Heart left ventricle (tissue), 16 donors: ENCODE measurements at regions of chr14 and their contacts with region 1.

Region 1: GRCh38 chr14:94001501-94002396 is 4.6 kb downstream of the CCDC197 start:
- DNase-seq: peak in 4 of 5 donors; percentile 52 to 66 (median 60)
- ATAC-seq: peak; percentile 68 to 79 (median 76)
- H3K4me3 ChIP-seq: no peak overlapping the region
- H3K27ac ChIP-seq: peak overlapping the region in 1 of 12 donors; percentile 43
- H3K4me1 ChIP-seq: peaks cover 0 to 30% (median 10%) of the 10 kb centered on the region in 12 donors
- H3K27me3 ChIP-seq: peaks cover 0 to 4% (median 0%) of the 10 kb centered on the region in 9 donors
- CTCF ChIP-seq: peak; percentile 89 to 98 (median 96)
- POLR2A ChIP-seq: no peak

Region 2: DNA sequence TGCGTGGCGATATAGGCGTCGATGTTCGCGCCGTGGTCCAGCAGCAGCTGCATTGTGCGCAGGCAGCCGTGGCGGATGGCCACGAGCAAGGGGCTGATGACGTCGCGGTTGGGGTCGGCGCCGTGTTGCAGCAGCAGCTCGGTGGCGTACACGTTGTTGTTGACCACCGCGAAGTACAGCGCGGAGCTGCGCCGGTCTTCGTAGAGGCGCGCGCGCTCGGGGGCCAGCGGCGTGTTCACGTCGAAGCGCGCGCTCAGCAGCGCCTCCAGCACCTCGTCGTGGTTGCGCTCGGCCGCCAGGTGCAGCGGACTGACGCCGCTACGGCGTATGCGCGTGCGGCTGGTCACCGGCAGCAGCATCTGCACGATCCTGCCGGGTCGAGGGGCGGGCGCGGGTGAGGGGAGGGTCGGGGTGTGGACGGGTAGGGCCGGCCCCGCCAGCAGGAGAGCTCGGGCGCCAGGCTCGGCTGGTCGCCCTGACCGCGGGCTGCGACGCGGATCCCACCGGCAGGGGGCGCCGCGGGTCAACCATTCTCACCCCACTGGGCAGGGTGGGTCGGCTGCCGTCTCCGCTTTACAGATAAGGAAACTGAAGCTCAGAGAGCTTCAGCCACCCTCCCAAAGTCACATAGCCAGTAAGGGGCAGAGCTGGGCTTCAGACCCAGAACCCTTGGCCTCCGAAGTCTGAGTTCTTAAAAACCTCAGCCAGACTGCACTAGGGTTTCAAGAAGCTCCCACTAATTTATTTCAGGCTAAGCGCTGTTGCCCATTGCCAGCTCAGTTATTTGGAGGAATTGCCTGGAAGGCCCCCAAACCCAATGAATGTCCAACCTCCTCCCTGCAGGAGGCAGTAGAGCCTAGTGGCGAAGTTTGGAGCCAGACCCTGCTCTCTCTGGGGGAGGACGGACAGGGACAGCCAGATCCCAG is 62.2 kb before region 1 on chr14:
- intact Hi-C with region 1: loop called (anchors 1 to 5 kb)
- DNase-seq: peak; percentile 73 to 92 (median 79)
- ATAC-seq: peak; percentile 54 to 80 (median 72)
- H3K4me3 ChIP-seq: peak overlapping the region in 9 of 12 donors; percentile 15 to 50 (median 25)
- H3K27ac ChIP-seq: peak overlapping the region in 3 of 12 donors; percentile 24 to 75 (median 37)
- H3K4me1 ChIP-seq: peaks cover 0 to 20% (median 4%) of the 10 kb centered on the region in 12 donors
- H3K27me3 ChIP-seq: peaks cover 0 to 18% (median 7%) of the 10 kb centered on the region in 9 donors
- CTCF ChIP-seq: peak; percentile 75 to 93 (median 82)
- POLR2A ChIP-seq: no peak

Region 3: GRCh38 chr14:93975791-93976476 is 25.8 kb before region 1 on chr14:
- intact Hi-C with region 1: loop called in 1 of 10 experiments (anchors 1 kb)
- DNase-seq: no peak
- ATAC-seq: peak; percentile 43 to 63 (median 53)
- H3K4me3 ChIP-seq: peak overlapping the region; percentile 27 to 62 (median 54)
- H3K27ac ChIP-seq: peak overlapping the region; percentile 74 to 97 (median 92)
- H3K4me1 ChIP-seq: peaks cover 0 to 83% (median 24%) of the 10 kb centered on the region in 12 donors
- H3K27me3 ChIP-seq: no peaks in the 10 kb centered on the region
- CTCF ChIP-seq: peak in 1 of 12 donors; percentile 5
- POLR2A ChIP-seq: no peak

Region 4: DNA sequence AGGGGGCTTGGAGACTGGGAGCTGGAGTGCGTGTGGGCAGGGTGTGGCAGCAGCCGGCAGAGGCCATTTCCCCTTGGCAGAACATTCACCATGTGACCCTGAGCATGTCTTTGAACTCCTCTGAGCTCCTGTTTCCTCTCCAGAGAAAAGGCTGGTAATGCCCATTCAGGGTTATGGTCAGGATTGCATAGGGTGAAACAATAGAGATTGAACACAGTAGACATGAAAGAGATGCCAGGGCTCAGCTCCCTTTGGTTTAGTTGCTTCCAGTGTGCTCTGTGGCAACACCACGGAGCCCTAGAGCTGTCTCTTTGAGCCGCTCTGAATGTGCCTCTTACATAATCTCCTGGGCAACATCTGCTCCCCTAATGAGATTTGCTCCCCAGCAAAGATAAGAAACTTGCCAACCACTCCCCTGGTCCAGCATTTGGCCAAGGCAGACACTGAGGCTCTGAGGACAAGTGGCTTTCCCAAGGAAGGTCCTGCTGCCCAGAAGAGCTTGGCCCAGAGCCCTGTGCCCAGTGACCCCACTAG is 113.4 kb after region 1 on chr14:
- intact Hi-C with region 1: no loop called
- DNase-seq: peak in 1 of 5 donors; percentile 44
- ATAC-seq: peak; percentile 19 to 59 (median 50)
- H3K4me3 ChIP-seq: peak overlapping the region in 6 of 12 donors; percentile 6 to 81 (median 22)
- H3K27ac ChIP-seq: peak overlapping the region in 11 of 12 donors; percentile 24 to 96 (median 84)
- H3K4me1 ChIP-seq: peaks cover 0 to 46% (median 32%) of the 10 kb centered on the region in 12 donors
- H3K27me3 ChIP-seq: no peaks in the 10 kb centered on the region
- CTCF ChIP-seq: no peak
- POLR2A ChIP-seq: no peak